ENCODE measurements at regions of chr7 and their contacts with region 1.

Region 1: GRCh38 chr7:107007007-107007891 is 37.3 kb upstream of the PRKAR2B start:
- DNase-seq: peak; percentile 87 to 99 (median 91)
- ATAC-seq: peak; percentile 85
- H3K4me3 ChIP-seq: peak overlapping the region; percentile 39
- H3K27ac ChIP-seq: peak overlapping the region; percentile 96
- H3K4me1 ChIP-seq: peaks cover 37 to 44% of the 10 kb centered on the region in 2 experiments
- H3K27me3 ChIP-seq: no peaks in the 10 kb centered on the region
- CTCF ChIP-seq: peak in 2 of 3 experiments; percentile 12 to 30; a peak in 2 of 6 replicates
- EP300 ChIP-seq: peak; percentile 99
- POLR2A ChIP-seq: peak; percentile 68
- RAD21 ChIP-seq: peak; percentile 50 to 57

Region 2: GRCh38 chr7:106978425-106979420 is 28.5 kb before region 1 on chr7:
- CTCF ChIA-PET with region 1: no interaction called
- POLR2A ChIA-PET with region 1: interaction called, 8 read pairs
- in situ Hi-C with region 1: no loop called
- intact Hi-C with region 1: loop called (anchors 1 kb)
- DNase-seq: peak; percentile 87 to 98 (median 92)
- ATAC-seq: peak; percentile 87
- H3K4me3 ChIP-seq: no peak overlapping the region
- H3K27ac ChIP-seq: peak overlapping the region; percentile 89
- H3K4me1 ChIP-seq: peaks cover 23 to 60% of the 10 kb centered on the region in 2 experiments
- H3K27me3 ChIP-seq: no peaks in the 10 kb centered on the region
- CTCF ChIP-seq: peak; percentile 57 to 68 (median 59)
- EP300 ChIP-seq: peak; percentile 98
- POLR2A ChIP-seq: peak; percentile 55; the same call in 1 of the 2 replicates
- RAD21 ChIP-seq: peak; percentile 10 to 68; a peak in 3 of 4 replicates

Region 3: GRCh38 chr7:107025449-107026103 is 18.3 kb after region 1 on chr7:
- CTCF ChIA-PET with region 1: no interaction called
- POLR2A ChIA-PET with region 1: interaction called, 34 read pairs
- in situ Hi-C with region 1: no loop called
- intact Hi-C with region 1: no loop called
- DNase-seq: peak; percentile 63 to 89 (median 66)
- ATAC-seq: peak; percentile 79
- H3K4me3 ChIP-seq: no peak overlapping the region
- H3K27ac ChIP-seq: peak overlapping the region; percentile 54
- H3K4me1 ChIP-seq: peaks cover 40 to 55% of the 10 kb centered on the region in 2 experiments
- H3K27me3 ChIP-seq: no peaks in the 10 kb centered on the region
- CTCF ChIP-seq: no peak
- EP300 ChIP-seq: peak; percentile 86
- POLR2A ChIP-seq: no peak
- RAD21 ChIP-seq: peak in 1 of 2 experiments; percentile 25; a peak in 2 of 4 replicates

Region 4: DNA sequence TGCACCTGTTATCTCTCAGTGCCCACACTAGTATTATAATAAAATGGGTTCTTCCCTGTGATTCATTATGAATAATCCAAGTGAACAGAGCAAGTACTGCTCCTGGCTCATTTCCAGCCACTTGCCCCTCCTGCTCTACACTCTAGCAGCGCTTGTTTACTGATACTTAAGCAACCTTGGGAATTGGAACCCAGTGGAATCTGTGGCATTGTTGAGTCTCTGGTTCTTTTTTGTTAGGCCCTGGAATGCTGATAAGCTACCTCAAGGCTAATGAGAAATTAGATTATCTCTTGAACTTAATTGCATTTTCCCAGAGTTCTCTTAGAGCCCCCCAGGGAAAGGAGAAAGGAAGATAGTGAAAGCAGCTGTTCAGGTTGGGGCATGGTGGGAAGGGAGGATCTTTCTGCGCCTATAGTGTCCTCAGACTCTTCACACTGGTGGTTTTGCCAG is 71.3 kb after region 1 on chr7:
- CTCF ChIA-PET with region 1: no interaction called
- POLR2A ChIA-PET with region 1: interaction called, 13 read pairs
- in situ Hi-C with region 1: no loop called
- intact Hi-C with region 1: loop called (anchors 1 kb)
- DNase-seq: peak; percentile 49 to 74 (median 61)
- ATAC-seq: peak; percentile 33
- H3K4me3 ChIP-seq: no peak overlapping the region
- H3K27ac ChIP-seq: peak overlapping the region; percentile 65
- H3K4me1 ChIP-seq: peaks cover 27 to 64% of the 10 kb centered on the region in 2 experiments
- H3K27me3 ChIP-seq: no peaks in the 10 kb centered on the region
- CTCF ChIP-seq: no peak
- EP300 ChIP-seq: no peak
- POLR2A ChIP-seq: no peak
- RAD21 ChIP-seq: no peak

Region 5: DNA sequence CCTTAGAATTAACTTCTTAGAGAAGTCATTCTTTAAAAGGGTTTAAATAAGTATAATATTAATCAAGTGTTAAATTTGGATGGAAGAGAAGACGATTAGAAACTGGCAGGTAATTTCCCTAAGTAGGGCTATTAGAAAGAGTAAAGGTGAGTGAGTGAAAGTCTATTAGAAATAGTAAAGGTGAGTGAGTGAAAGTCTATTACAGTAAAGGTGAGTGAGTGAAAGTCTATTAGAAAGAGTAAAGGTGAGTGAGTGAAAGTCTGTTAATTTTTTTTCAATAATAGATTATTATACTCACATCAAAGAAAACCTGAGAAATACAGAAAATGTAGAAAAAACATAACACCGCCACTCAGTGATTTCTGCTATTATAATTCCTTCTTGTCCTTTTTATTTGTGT is 150.8 kb after region 1 on chr7:
- CTCF ChIA-PET with region 1: no interaction called
- POLR2A ChIA-PET with region 1: no interaction called
- in situ Hi-C with region 1: no loop called
- intact Hi-C with region 1: no loop called
- DNase-seq: no peak
- ATAC-seq: no peak
- H3K4me3 ChIP-seq: no peak overlapping the region
- H3K27ac ChIP-seq: no peak overlapping the region
- H3K4me1 ChIP-seq: no peaks in the 10 kb centered on the region
- H3K27me3 ChIP-seq: no peaks in the 10 kb centered on the region
- CTCF ChIP-seq: no peak
- EP300 ChIP-seq: no peak
- POLR2A ChIP-seq: no peak
- RAD21 ChIP-seq: no peak

Region 6: GRCh38 chr7:107168233-107169119 is 161.2 kb after region 1 on chr7 and contains the start of gene HBP1:
- CTCF ChIA-PET with region 1: no interaction called
- POLR2A ChIA-PET with region 1: interaction called, 8 read pairs
- in situ Hi-C with region 1: no loop called
- intact Hi-C with region 1: loop called (anchors 1 kb)
- DNase-seq: peak; percentile 96 to 100 (median 98)
- ATAC-seq: peak; percentile 89
- H3K4me3 ChIP-seq: peak within 1 kb of the TSS; percentile 74
- H3K27ac ChIP-seq: peak within 1 kb of the TSS; percentile 93
- H3K4me1 ChIP-seq: peaks cover 5 to 21% of the 10 kb centered on the region in 2 experiments
- H3K27me3 ChIP-seq: no peaks in the 10 kb centered on the region
- CTCF ChIP-seq: 0 out of 6 replicates have a peak, but pooled peaks of 1 of the 3 experiments have one; percentile 10
- EP300 ChIP-seq: no peak; the same call in 1 of the 2 replicates
- POLR2A ChIP-seq: peak; percentile 72
- RAD21 ChIP-seq: no peak
- polyA plus RNA-seq, gene HBP1: 37.9 to 44.9 TPM

Region 7: GRCh38 chr7:107614425-107614824 is 607.2 kb after region 1 on chr7:
- CTCF ChIA-PET with region 1: no interaction called
- POLR2A ChIA-PET with region 1: no interaction called
- in situ Hi-C with region 1: no loop called
- intact Hi-C with region 1: no loop called
- DNase-seq: no peak
- ATAC-seq: no peak
- H3K4me3 ChIP-seq: no peak overlapping the region
- H3K27ac ChIP-seq: no peak overlapping the region
- H3K4me1 ChIP-seq: no peaks in the 10 kb centered on the region
- H3K27me3 ChIP-seq: no peaks in the 10 kb centered on the region
- CTCF ChIP-seq: no peak
- EP300 ChIP-seq: no peak
- POLR2A ChIP-seq: no peak
- RAD21 ChIP-seq: no peak